ENCODE measurements at regions of chr16 and their contacts with region 1.

Region 1: GRCh38 chr16:30984669-30985400 is at the start of gene HSD3B7:
- DNase-seq: peak; percentile 91
- ATAC-seq: peak; percentile 92
- H3K4me3 Mint-ChIP-seq: no peak within 1 kb of the TSS
- H3K27ac Mint-ChIP-seq: peak within 1 kb of the TSS; percentile 31
- H3K4me1 Mint-ChIP-seq: peaks cover 3% of the 10 kb centered on the region
- H3K27me3 Mint-ChIP-seq: no peaks in the 10 kb centered on the region
- total RNA-seq, gene HSD3B7: 1.6 to 2.2 TPM

Region 2: GRCh38 chr16:31168848-31169247 is 184.0 kb after region 1 on chr16:
- CTCF ChIA-PET with region 1: no interaction called
- POLR2A ChIA-PET with region 1: no interaction called
- intact Hi-C with region 1: no loop called
- DNase-seq: no peak
- ATAC-seq: no peak
- H3K4me3 Mint-ChIP-seq: no peak overlapping the region
- H3K27ac Mint-ChIP-seq: no peak overlapping the region
- H3K4me1 Mint-ChIP-seq: no peaks in the 10 kb centered on the region
- H3K27me3 Mint-ChIP-seq: no peaks in the 10 kb centered on the region

Region 3: GRCh38 chr16:31298967-31299366 is 314.1 kb after region 1 on chr16:
- CTCF ChIA-PET with region 1: no interaction called
- POLR2A ChIA-PET with region 1: no interaction called
- intact Hi-C with region 1: loop called in 1 of 2 experiments (anchors 10 kb)
- DNase-seq: no peak
- ATAC-seq: no peak
- H3K4me3 Mint-ChIP-seq: no peak overlapping the region
- H3K27ac Mint-ChIP-seq: no peak overlapping the region
- H3K4me1 Mint-ChIP-seq: peaks cover 7% of the 10 kb centered on the region
- H3K27me3 Mint-ChIP-seq: peaks cover 12% of the 10 kb centered on the region